Activated CD8-positive, alpha-beta T cell treated with anti-CD3 and anti-CD28 coated beads, Interleukin-2, amount 10 ng/mL, durations not matched to agents 7 days and 5 days (primary cell): ENCODE measurements at regions of chr1 and their contacts with region 1.

Region 1: GRCh38 chr1:22025368-22026155 is 24.1 kb downstream of the CELA3A start:
- DNase-seq: peak; percentile 93
- ATAC-seq: peak; percentile 65
- H3K4me3 Mint-ChIP-seq: peak overlapping the region; percentile 89
- H3K27ac Mint-ChIP-seq: peak overlapping the region; percentile 97
- H3K4me1 Mint-ChIP-seq: peaks cover 60% of the 10 kb centered on the region
- H3K27me3 Mint-ChIP-seq: no peaks in the 10 kb centered on the region

Region 2: GRCh38 chr1:21782868-21783678 is 242.5 kb before region 1 on chr1 and contains the start of gene USP48:
- CTCF ChIA-PET with region 1: interaction called, 5 read pairs
- POLR2A ChIA-PET with region 1: interaction called, 27 read pairs
- DNase-seq: peak; percentile 97
- ATAC-seq: peak; percentile 89
- H3K4me3 Mint-ChIP-seq: peak within 1 kb of the TSS; percentile 82
- H3K27ac Mint-ChIP-seq: peak within 1 kb of the TSS; percentile 99
- H3K4me1 Mint-ChIP-seq: peaks cover 24% of the 10 kb centered on the region
- H3K27me3 Mint-ChIP-seq: peaks cover 3% of the 10 kb centered on the region
- total RNA-seq, gene USP48: 71.3 to 74.9 TPM

Region 3: DNA sequence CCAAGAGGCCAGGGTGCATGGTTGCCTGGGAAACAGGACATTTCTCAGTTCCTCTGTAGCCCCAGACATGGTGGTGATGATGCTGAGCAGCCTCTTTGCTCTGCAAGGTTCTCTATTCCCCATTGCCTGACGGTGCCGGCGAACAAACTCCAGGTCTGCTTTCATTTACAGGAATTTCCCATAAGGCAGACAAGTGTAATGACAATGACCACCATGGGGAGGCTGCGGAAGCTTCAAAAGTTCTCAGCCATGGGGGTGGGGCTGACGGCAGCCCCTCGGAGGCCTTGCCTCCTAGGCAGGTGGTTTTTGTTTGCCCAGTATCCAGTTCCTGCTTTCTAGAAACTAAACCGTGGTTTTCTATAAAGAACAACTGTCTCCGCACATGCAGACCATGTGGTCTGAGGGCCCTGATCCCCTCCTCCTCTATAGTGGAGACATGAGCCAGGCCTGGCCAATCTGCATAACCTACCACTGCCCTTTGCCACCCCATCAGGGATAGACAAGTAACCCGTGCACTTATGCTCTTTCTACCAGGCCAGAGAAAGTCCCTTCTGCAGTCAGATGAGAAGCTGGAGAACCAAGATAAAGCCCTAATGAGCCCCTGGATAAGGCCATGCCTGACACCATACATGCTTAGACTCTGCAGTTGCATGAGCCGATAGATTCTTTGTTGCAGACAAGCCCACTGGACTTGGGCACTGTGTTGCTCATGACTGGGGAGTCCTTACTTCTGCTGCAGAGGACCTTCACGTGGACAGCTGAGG is 159.4 kb before region 1 on chr1:
- CTCF ChIA-PET with region 1: no interaction called
- POLR2A ChIA-PET with region 1: no interaction called
- DNase-seq: no peak
- ATAC-seq: no peak
- H3K4me3 Mint-ChIP-seq: no peak overlapping the region
- H3K27ac Mint-ChIP-seq: no peak overlapping the region
- H3K4me1 Mint-ChIP-seq: peaks cover 5% of the 10 kb centered on the region
- H3K27me3 Mint-ChIP-seq: no peaks in the 10 kb centered on the region

Region 4: DNA sequence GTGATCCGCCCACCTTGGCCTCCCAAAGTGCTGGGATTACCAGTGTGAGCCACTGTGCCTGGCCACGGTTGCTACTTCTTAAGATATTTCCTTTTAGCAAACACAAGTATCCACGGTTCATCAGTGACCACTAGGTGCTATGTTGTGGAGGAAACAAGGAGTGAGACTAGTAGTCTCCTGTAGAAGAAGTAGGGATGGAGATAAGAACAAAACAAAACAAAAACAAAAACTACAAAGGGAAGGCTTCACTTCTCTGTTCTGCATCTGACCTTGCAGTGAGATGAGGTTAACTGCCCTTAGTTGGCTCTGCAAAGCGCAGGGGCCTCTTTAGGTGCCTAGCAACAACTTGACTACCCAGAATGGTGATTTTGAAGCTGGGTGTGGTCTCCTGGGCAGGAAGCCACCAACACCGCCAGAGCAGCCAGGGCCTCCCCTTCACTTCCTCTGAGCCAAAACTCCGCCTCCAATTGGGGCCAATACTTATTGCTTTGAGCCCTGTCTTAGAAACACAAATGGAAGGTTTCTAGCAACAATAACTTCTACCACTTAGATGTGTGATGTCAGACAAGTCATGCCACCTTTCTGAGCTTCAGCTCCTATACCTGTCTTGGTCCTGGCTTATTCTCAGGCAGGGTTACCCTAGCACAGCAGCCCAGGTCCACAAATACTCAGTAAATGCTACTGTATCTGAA is 14.2 kb after region 1 on chr1:
- CTCF ChIA-PET with region 1: interaction called, 42 read pairs
- POLR2A ChIA-PET with region 1: interaction called, 201 read pairs
- DNase-seq: peak; percentile 97
- ATAC-seq: peak; percentile 97
- H3K4me3 Mint-ChIP-seq: peak overlapping the region; percentile 71
- H3K27ac Mint-ChIP-seq: peak overlapping the region; percentile 99
- H3K4me1 Mint-ChIP-seq: peaks cover 52% of the 10 kb centered on the region
- H3K27me3 Mint-ChIP-seq: no peaks in the 10 kb centered on the region

Region 5: GRCh38 chr1:22044690-22045420 is 19.3 kb after region 1 on chr1:
- CTCF ChIA-PET with region 1: interaction called, 210 read pairs
- POLR2A ChIA-PET with region 1: interaction called, 310 read pairs
- DNase-seq: no peak
- ATAC-seq: no peak
- H3K4me3 Mint-ChIP-seq: no peak overlapping the region
- H3K27ac Mint-ChIP-seq: peak overlapping the region; percentile 14
- H3K4me1 Mint-ChIP-seq: peaks cover 59% of the 10 kb centered on the region
- H3K27me3 Mint-ChIP-seq: no peaks in the 10 kb centered on the region

Region 6: DNA sequence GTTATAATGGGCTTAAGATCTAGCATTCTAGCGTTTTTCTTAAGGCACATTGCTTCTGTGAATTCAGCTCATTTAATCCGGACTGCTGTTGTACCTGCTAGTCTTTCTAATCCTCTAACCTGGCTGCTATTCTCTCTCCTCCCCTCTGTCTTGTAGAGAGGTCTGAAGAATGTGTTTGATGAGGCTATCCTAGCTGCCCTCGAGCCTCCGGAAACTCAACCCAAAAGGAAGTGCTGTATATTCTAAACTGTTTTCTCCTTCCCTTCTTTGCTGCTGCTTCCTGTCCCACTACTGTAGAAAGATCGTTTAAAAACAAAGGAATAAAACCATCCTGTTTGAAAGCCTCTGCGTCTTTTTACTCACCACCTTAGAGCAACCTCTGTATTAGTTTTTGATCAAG is 64.2 kb after region 1 on chr1:
- CTCF ChIA-PET with region 1: interaction called, 13 read pairs
- POLR2A ChIA-PET with region 1: interaction called, 20 read pairs
- DNase-seq: peak; percentile 52
- ATAC-seq: peak; percentile 75
- H3K4me3 Mint-ChIP-seq: peak overlapping the region; percentile 62
- H3K27ac Mint-ChIP-seq: peak overlapping the region; percentile 87
- H3K4me1 Mint-ChIP-seq: peaks cover 88% of the 10 kb centered on the region
- H3K27me3 Mint-ChIP-seq: no peaks in the 10 kb centered on the region

Region 7: DNA sequence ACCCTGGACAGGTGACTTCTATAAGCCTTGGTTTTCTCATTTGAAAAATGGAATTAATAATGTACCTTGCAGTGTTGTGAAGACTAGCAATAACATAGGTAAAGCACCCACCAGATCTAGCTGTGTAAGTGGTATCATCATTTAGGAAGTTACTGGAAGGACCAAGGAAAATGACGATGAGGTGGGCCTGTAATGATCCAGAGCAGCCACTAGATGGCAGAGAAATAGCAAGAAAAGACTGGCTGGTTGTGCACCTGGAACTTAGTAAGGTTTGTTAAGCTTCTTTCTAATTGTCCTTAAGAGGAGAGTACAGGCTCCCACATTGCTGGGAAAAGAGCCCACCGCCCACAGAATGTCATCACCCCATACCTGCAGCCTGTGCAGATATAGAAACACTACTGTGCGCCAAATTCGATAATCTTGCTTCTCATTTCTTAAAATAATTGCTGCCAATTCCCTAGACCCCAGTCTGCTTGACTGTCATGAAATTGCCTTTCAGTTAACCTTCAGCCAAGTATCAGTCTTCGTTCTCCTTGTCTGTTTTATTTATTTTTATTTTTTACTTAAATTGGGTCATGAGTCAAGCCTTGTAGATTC is 80.1 kb after region 1 on chr1:
- CTCF ChIA-PET with region 1: interaction called, 16 read pairs
- POLR2A ChIA-PET with region 1: interaction called, 15 read pairs
- DNase-seq: peak; percentile 52
- ATAC-seq: peak; percentile 31
- H3K4me3 Mint-ChIP-seq: peak overlapping the region; percentile 44
- H3K27ac Mint-ChIP-seq: peak overlapping the region; percentile 92
- H3K4me1 Mint-ChIP-seq: peaks cover 56% of the 10 kb centered on the region
- H3K27me3 Mint-ChIP-seq: no peaks in the 10 kb centered on the region

Region 8: GRCh38 chr1:22275721-22276395 is 250.3 kb after region 1 on chr1:
- CTCF ChIA-PET with region 1: no interaction called
- POLR2A ChIA-PET with region 1: no interaction called
- DNase-seq: peak; percentile 52
- ATAC-seq: peak; percentile 70
- H3K4me3 Mint-ChIP-seq: no peak overlapping the region
- H3K27ac Mint-ChIP-seq: no peak overlapping the region
- H3K4me1 Mint-ChIP-seq: no peaks in the 10 kb centered on the region
- H3K27me3 Mint-ChIP-seq: peaks cover 9% of the 10 kb centered on the region